ENCODE measurements at regions of chr1 and their contacts with region 1.

Region 1: DNA sequence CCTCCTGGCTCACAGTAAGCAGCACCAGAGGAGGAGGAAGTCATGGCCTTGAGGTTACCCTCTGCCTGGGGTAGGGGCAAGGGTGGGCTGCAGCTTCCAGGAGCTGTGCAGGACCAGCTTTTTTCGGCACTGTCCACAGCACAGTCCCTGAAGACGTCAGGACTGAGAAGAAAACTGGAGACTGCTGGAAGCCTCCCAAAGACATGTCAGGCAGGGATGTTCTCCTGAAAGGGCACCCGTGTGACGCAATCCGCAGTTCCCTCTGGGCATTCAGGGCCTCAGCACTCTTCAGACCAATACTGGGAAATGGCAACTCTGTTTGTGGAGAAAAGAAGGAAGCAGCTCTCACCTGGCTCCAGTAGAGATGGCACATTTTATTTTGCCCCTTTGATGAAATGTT is 64.8 kb upstream of the TENT5C start:
- DNase-seq: no peak
- H3K4me3 Mint-ChIP-seq: no peak overlapping the region
- H3K27ac Mint-ChIP-seq: no peak overlapping the region
- H3K4me1 Mint-ChIP-seq: peaks cover 19% of the 10 kb centered on the region
- H3K27me3 Mint-ChIP-seq: no peaks in the 10 kb centered on the region

Region 2: DNA sequence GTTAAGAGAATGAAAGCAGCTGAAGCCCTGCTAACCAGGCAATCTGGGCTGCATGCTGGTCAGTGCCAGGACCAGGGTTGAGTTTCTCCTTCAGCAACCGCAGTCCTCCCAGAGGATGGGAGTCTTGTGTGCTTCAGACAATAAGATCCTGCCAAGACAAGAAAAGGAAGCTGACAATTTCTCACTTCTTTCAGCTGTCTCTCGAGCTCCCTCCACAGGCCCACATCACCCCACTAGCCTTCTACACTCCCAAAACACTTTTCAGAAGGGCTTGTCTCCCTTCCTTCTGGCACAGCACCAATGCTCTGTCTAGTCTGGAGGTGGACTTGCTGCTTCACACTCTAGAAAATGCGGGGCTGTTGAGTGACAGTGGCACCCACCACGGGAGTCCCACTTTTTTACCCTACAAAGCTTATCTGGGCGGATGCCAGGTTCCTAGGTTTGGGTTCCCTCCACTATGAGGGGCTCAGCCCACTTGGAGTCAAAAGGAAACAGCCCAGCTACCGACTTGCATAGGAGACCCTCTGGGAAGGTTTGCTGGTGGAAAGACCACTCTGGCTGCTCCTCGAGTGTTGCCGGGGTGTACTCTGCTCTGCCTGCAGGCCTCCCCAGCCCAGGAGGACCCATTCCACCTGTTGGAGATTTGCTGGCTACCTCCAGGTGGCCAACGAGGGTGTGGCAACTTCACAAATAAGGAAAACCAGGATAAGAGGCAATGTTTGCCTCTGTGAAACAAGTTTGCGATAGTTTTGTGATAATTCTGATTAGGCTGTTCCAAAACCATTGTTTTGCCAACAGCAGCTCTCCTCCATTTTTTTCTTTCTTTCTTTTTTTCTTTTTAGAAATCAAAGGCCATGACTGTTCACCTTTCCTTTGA is 133.8 kb after region 1 on chr1:
- CTCF ChIA-PET with region 1: interaction called, 41 read pairs
- intact Hi-C with region 1: loop called (anchors 1 kb)
- DNase-seq: peak; percentile 73
- H3K4me3 Mint-ChIP-seq: no peak overlapping the region
- H3K27ac Mint-ChIP-seq: peak overlapping the region; percentile 46
- H3K4me1 Mint-ChIP-seq: peaks cover 4% of the 10 kb centered on the region
- H3K27me3 Mint-ChIP-seq: peaks cover 11% of the 10 kb centered on the region